Right ventricle myocardium inferior (tissue), 1 donor: ENCODE measurements at regions of chr6 and their contacts with region 1.

Region 1: GRCh38 chr6:35522660-35523658 is 10.3 kb upstream of the TULP1 start:
- DNase-seq: peak; percentile 89
- ATAC-seq: peak; percentile 83

Region 2: GRCh38 chr6:35737413-35738211 is 214.7 kb after region 1 on chr6:
- intact Hi-C with region 1: loop called (anchors 1 kb)
- DNase-seq: no peak
- ATAC-seq: peak; percentile 82